Prostate gland (tissue), 2 donors: ENCODE measurements at regions of chr4 and their contacts with region 1.

Region 1: DNA sequence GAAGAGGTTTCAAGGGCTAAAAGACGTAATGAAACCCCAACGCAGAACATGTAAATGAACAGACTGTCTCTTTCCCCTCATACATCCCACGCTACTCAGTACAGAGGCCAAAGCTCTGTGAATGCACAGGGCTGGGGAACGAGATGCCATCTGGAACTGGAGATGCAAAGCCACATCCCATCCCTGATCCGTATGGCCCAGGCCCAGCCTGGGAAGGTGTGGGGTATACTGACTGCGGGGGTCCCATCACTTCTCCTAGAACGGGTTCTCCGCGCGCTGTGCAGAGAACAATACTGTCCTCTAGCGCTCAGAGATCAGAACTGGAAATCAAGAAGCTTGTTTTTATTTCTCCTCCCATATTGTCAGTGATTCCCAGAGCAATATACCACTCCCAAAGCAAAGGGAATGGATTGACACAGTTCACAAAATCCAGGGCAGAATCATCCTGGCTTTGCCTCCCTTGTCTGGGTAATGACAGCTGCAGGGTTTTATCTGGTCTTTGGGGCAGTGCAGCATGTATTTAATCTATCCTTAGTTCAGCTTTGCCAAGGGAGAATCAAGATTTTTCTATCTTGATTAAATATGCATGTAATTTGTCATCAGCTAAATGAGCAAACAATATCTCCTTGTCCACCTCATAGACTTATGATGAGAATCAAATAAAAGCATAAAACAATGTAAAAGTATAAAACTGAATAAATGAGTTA is 47.3 kb upstream of the TLR3 start:
- DNase-seq: no peak
- H3K4me3 ChIP-seq: no peak overlapping the region
- H3K27ac ChIP-seq: no peak overlapping the region
- H3K4me1 ChIP-seq: no peaks in the 10 kb centered on the region
- H3K27me3 ChIP-seq: no peaks in the 10 kb centered on the region
- CTCF ChIP-seq: peak; percentile 54 to 79 (median 67)
- POLR2A ChIP-seq: no peak

Region 2: DNA sequence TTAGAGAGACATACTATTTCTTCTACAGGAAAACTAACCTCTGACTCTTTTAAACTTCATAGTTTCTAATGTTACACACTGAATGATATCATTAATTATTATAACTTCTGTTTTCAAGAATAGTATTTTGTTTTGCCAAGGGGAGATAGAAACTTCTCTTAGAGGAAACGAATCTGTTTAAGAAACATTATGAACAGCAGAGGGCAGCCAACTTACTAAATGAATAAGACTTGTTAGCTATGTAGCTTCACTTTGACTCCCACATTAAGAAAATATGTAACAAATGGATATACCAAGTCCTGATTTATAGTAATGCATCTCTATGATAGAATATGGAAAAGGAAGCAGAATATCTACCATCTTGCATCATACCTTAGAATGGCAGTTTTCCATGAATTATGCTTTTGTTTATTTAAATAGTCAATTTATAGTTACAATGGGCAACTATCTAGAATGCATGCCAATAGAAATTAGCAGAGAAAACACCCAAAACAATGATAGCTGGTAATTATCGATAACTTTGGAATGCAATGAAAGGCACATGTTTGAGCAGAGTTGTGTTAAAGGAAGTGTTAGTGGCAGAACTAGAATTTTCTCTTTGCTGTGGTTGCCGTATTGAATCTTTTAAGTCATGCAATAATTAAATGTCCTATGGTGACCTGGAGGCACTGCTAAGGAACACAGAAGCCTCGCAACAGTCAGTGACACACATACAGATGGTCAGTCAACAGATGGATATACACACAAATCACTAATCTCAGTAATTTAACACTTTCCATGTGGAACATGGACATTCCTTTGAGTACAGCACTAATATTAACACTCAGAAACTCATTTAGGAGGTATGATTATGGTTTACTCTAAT is 380.6 kb before region 1 on chr4:
- intact Hi-C with region 1: loop called (anchors 5 kb)
- DNase-seq: peak; percentile 55
- H3K4me3 ChIP-seq: no peak overlapping the region
- H3K27ac ChIP-seq: no peak overlapping the region
- H3K4me1 ChIP-seq: peaks cover 2% of the 10 kb centered on the region
- H3K27me3 ChIP-seq: no peaks in the 10 kb centered on the region
- CTCF ChIP-seq: peak in 3 of 4 experiments; percentile 42 to 72 (median 62)
- POLR2A ChIP-seq: no peak

Region 3: DNA sequence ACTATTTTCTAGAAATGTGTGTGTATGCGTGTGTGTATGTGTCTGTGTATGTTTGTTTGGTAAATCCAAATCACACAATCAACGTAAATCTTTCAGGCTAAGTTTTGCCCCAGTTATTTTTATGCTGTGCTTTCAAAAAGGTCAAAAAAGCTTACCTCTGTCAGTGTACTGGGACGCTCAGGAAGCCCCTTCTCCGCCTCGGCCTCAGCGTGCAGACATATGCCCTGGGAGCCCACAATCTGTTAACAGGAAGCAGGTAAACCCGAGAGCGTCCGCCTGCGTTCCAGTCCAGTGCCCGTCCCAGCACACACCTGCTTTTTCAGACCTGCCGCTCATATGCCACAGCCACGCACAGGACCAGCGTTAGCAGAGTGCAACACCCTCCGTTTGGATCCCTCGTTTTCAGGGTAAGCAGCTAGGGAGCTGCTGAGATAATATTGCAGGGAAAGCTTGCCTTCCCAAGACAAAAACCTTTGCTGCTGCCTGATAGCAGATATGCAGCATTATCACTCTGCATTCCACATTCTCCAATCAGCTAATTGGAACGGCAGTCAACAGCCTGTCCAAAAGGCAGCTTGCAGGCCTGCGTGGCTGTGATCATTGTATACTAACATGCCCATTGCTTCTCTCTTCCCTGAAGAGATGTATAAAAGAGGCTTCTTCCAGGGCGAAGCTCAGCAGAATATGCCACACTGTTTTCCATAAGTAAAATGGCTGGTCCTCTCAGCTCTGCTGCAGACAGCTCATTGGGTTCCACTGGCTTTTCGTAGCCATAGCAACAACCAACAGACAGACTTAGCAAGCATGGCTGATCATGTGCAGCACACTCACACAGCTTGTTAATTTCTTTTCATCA is 209.9 kb before region 1 on chr4 and contains the start of gene SORBS2:
- intact Hi-C with region 1: loop called (anchors 10 kb)
- DNase-seq: peak; percentile 76
- H3K4me3 ChIP-seq: peak within 1 kb of the TSS; percentile 35 to 42
- H3K27ac ChIP-seq: peak within 1 kb of the TSS; percentile 67 to 74
- H3K4me1 ChIP-seq: no peaks in the 10 kb centered on the region
- H3K27me3 ChIP-seq: no peaks in the 10 kb centered on the region
- CTCF ChIP-seq: no peak
- POLR2A ChIP-seq: peak; percentile 21
- total RNA-seq, gene SORBS2: 175 to 242 TPM

Region 4: DNA sequence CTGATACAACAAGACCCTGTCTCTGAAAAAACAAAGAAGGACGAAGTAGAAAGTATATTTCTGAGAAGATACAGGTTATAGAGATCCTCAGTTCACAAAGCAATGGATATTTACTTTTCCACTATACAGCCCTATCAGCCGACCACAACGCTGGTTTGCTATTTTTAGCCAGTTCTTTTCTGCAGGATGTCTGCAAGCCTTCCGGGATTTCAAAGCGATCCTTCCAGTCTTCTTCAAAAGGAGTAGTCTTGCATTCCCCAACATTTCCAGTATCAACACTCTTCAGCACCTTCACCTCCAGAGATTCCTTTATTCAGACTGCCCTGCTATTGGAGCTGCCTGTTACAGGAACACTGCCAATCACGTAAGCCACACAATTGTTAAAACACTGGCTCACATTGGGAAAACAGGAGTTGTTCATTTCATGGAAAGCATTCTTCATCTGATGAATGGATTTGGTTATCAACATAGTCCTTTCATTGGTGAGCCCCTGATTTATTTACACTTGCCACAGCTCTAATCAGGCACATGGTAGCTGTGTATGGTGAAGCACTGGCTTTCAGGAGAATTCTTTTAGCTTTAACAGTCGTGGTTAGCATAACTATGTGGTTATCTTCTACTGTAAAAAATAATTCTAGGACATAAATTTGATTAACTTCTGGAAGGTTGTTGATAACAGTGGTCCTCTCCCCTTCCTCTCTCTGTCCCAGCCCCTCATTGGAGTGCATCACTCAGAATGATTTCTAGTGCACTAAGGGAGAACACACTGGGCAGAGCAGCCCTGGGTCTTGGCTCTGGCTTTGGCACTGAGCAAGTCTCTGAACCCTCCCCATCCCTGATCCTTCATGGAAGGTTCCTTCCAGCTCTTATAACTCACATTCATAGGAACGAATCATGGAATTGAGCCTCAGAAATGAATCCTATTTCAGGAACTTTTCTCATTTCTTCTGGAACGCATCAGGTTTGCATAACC is 99.7 kb before region 1 on chr4:
- intact Hi-C with region 1: no loop called
- DNase-seq: no peak
- H3K4me3 ChIP-seq: no peak overlapping the region
- H3K27ac ChIP-seq: no peak overlapping the region
- H3K4me1 ChIP-seq: no peaks in the 10 kb centered on the region
- H3K27me3 ChIP-seq: no peaks in the 10 kb centered on the region
- CTCF ChIP-seq: no peak
- POLR2A ChIP-seq: no peak